HEK293 (cell line): ENCODE measurements at regions of chr6 and their contacts with region 1.

Region 1: DNA sequence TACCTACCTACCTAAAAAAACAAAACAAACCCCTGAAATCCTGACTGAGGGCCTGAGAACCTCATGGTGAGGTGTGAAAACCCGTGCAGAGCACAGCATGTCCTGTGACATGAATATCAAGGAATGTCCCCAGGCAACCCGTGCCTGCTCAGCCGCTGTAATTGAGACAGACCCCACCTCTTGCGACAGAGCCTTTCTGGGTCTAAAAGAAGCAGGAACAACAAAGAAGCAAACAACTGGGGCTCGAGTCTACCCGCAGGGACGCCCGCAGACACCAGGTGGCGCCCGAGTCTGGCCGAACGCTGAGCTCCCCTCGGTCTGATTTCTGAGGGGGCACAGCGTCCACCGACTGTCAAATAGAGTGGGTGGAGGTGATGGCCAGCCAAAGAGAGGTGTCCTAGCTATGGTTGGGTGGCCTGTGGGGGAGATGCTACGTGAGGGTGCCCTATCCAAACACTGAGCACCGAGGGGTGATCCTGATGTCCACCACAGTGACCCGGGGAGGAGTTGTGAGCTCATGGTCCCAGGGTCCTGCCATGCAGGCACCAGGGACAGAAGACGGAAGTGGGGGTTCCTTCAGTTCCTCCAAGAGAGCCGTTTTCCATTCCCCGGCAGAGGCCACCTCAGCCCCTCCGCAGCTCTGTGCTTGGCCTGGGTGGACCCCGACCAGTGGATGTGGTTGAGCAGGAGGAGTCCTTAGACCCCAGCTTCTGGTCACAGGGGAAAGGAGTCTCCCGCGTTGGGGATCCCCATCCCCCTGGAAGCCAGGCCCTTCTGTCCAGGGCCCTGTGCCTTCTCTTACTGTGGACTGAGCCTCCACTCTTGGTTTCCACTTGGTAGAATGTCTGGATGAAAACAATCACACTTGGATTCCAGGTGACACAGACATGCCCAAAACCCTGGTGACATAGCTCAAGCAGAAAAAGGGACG is 268.2 kb downstream of the CDC5L start:
- H3K4me3 ChIP-seq: no peak overlapping the region
- H3K27ac ChIP-seq: no peak overlapping the region; the same call in 1 of the 2 replicates
- H3K4me1 ChIP-seq: peaks cover 12% of the 10 kb centered on the region
- CTCF ChIP-seq: peak; percentile 88

Region 2: GRCh38 chr6:44367681-44368080 is 288.0 kb before region 1 on chr6:
- CTCF ChIA-PET with region 1: no interaction called
- POLR2A ChIA-PET with region 1: no interaction called
- H3K4me3 ChIP-seq: no peak overlapping the region
- H3K27ac ChIP-seq: no peak overlapping the region
- H3K4me1 ChIP-seq: no peaks in the 10 kb centered on the region
- CTCF ChIP-seq: no peak

Region 3: GRCh38 chr6:44667668-44668390 is 12.2 kb after region 1 on chr6:
- CTCF ChIA-PET with region 1: interaction called, 41 read pairs
- POLR2A ChIA-PET with region 1: interaction called, 3 read pairs
- H3K4me3 ChIP-seq: no peak overlapping the region
- H3K27ac ChIP-seq: no peak overlapping the region
- H3K4me1 ChIP-seq: peaks cover 9% of the 10 kb centered on the region; the same call in 1 of the 2 replicates
- CTCF ChIP-seq: no peak

Region 4: GRCh38 chr6:44800171-44800783 is 144.6 kb after region 1 on chr6:
- CTCF ChIA-PET with region 1: interaction called, 11 read pairs
- POLR2A ChIA-PET with region 1: no interaction called
- H3K4me3 ChIP-seq: no peak overlapping the region
- H3K27ac ChIP-seq: peak overlapping the region; percentile 58
- H3K4me1 ChIP-seq: peaks cover 18% of the 10 kb centered on the region
- CTCF ChIP-seq: no peak